ENCODE measurements at regions of chr10 and their contacts with region 1.

Region 1: DNA sequence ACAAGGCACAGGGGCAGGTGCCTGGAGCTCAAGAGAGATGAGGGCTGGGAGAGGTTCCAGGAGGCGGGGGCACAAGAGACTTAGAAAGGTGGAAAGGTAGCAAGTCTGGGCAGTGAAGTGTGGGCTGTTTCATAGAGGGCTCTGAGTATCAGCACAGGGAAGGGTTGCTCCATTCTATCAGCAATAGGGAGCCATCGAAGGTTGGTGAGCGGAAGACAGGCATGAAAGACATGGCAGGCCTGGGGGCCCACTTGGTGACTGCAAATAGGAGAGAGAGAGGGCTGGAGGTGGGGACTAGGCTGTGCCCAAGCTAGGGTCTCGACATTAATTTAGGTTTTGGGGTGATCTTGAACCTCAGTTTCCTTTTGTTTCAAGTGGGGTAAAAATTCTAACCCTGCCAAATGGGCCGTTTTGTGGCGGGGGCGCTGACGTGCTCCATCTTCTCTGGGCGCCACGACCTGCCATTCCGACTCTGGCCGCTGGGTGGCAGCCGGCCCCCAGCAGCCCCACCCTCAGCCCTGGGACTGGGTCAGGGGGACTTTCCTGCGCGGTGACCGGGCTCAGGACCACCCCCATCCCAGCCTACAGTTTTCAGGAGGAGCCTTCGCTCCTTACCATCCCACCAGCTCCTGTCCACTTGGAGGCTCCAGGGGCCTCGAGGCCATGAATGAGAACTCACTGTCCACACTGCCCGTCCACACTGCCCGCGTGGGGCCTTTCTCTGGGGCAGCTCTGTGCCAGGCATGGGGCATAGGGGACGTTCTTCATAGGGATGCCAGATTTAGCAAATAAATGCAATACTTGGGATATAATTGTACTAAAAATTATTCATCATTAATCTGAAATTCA is 37.2 kb upstream of the PCBD1 start:
- DNase-seq: no peak
- H3K4me3 ChIP-seq: no peak overlapping the region
- CTCF ChIP-seq: peak; percentile 90

Region 2: GRCh38 chr10:69663369-69663947 is 1262.1 kb before region 1 on chr10:
- CTCF ChIA-PET with region 1: no interaction called
- POLR2A ChIA-PET with region 1: no interaction called
- DNase-seq: no peak
- H3K4me3 ChIP-seq: no peak overlapping the region
- CTCF ChIP-seq: no peak

Region 3: DNA sequence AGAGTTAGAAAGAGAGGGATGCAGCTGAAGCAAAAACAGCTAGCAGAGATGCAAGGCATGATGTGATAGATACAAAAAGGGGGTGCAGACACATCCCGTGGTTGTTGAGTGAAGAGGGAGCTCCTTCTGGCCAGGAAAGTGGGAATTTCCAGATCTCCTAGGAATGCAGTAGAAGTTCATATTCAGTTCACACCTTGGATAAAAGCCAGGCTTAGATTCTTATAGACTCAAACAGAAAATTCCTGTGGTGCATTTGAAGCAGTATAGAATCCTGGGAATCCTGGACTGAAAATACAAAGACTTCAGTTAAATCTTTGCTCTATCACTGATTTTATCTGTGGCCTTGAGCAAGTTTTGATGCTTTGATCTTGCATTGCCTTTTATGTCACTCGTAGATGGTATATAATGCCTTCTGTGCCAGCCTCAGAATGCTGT is 76.0 kb before region 1 on chr10:
- CTCF ChIA-PET with region 1: no interaction called
- POLR2A ChIA-PET with region 1: no interaction called
- DNase-seq: peak; percentile 83
- H3K4me3 ChIP-seq: no peak overlapping the region
- CTCF ChIP-seq: no peak

Region 4: DNA sequence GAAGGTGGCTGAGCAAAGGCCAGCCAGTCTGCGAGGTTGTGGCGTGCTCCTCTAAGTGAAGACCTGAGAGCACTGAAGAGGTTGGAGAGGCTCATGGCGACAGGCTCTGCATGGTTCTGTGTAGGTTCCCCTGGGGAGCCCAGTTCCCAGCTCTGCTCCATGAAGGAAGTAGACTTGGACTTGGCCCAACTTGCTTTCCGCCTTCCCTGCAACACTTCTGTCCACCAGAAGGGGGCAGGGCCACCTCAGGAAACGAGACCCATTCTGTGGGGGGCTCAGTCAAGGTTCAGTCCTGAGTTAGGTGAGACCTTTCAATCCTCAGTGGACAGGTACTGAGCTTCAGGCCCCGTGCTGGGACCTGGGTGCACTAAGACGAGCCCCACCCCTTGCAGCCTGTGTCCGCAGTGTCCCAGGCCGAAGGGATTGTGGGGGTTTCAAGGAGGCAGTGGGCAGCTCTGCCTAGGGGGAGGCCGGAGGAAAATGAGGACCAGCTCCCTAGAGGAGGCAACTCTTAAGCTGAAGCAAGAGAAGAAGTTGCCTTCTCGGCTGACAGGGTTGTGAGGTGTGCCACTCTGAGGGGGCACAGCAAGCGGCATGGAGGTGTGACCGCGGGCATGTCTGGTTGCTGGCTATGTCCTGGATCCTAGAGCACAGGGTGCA is 22.2 kb before region 1 on chr10:
- CTCF ChIA-PET with region 1: interaction called, 55 read pairs
- POLR2A ChIA-PET with region 1: no interaction called
- DNase-seq: no peak
- H3K4me3 ChIP-seq: no peak overlapping the region
- CTCF ChIP-seq: peak; percentile 87

Region 5: DNA sequence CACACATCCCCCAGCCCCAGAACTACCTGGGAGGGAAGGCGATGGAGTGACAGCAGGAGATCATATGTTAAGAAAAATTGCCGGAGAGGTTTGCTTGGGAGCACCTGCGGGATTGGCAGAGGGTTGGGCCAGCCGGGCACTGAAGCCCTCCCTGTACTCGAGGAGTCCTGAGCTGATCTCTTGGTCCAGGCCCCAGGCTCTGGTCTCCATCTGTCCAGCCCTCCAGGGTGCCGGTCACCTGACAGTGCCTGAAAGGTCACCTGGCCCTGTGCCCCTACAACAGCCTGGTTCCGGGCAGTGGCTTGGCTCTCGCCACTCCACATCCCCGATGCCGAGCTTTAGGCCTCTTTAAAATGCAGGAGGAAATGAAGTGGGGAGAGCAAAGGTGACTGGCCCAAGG is 10.0 kb after region 1 on chr10:
- CTCF ChIA-PET with region 1: interaction called, 31 read pairs
- POLR2A ChIA-PET with region 1: no interaction called
- DNase-seq: no peak
- H3K4me3 ChIP-seq: no peak overlapping the region
- CTCF ChIP-seq: no peak

Region 6: GRCh38 chr10:71205468-71205867 is 279.9 kb after region 1 on chr10:
- CTCF ChIA-PET with region 1: interaction called, 35 read pairs
- POLR2A ChIA-PET with region 1: no interaction called
- DNase-seq: no peak
- H3K4me3 ChIP-seq: no peak overlapping the region
- CTCF ChIP-seq: no peak

Region 7: DNA sequence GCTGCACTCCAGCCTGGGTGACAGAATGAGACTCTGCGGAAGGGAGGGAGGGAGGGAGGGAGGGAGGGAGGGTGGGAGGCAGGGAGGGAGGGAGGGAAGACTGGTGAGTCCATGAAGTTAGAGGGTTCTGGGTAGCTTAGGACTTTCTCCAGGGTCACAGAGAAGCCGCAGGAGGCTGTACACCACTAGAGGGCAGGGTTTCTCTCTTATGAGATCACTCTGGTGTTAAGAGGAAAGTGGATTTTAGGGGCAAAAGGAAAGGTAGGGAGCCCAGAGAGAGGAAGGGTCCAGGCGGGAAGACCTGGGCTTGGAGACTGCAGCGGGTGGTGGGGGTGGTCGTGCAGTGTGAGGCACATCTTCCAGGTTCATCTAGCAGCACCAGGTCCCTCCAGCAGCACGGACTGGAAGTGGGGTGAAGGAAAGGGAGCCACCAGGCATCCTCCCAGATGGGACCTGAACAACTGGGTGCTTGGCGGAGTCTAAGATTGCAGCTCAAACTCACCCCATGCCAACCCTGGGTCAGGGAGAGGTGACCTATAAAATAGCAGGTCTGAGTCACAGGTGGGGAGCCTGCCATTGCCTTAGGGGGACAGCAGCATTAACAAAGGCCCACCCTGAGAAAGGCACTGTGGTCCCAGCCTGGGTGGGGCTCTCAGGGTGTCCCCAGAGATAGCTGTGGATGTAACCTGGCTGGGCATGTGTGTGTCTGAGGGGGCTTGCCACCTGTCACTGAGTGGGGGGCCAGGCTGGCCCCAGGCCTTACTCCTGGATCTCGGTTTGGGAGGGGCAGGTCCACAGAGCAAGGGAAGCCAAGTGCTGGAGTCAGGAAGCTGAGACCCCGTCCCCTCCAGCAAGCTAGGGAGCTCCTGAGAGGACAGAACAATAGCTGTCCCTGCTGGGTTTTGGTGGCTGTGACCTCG is 345.0 kb after region 1 on chr10:
- CTCF ChIA-PET with region 1: interaction called, 27 read pairs
- POLR2A ChIA-PET with region 1: no interaction called
- DNase-seq: no peak
- H3K4me3 ChIP-seq: no peak overlapping the region
- CTCF ChIP-seq: peak; percentile 73

Region 8: DNA sequence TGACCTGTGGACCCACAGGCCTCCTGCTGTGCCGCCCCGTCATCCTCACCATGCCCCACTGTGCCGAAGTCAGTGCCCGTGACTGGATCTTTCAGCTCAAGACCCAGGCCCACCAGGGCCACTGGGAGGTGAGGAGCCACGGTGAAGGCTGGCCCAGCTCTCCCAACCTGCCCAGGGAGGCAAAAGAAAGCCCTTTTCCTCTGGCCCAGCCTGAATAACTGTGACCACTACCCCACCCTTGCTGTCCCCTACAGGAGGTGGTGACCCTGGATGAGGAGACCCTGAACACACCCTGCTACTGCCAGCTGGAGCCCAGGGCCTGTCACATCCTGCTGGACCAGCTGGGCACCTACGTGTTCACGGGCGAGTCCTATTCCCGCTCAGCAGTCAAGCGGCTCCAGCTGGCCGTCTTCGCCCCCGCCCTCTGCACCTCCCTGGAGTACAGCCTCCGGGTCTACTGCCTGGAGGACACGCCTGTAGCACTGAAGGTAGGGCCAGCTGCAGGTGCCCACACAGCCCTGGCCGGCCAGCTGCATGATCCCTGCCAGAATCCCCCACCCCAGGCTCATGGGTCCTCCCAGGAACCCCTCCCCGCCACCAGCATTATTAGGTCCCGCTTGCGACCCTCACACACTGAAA is 368.0 kb after region 1 on chr10:
- CTCF ChIA-PET with region 1: interaction called, 14 read pairs
- POLR2A ChIA-PET with region 1: no interaction called
- DNase-seq: no peak
- H3K4me3 ChIP-seq: no peak overlapping the region
- CTCF ChIP-seq: no peak

Measured in AG04449 (cell line).